SK-N-SH (cell line): ENCODE measurements at regions of chr2 and their contacts with region 1.

Region 1: DNA sequence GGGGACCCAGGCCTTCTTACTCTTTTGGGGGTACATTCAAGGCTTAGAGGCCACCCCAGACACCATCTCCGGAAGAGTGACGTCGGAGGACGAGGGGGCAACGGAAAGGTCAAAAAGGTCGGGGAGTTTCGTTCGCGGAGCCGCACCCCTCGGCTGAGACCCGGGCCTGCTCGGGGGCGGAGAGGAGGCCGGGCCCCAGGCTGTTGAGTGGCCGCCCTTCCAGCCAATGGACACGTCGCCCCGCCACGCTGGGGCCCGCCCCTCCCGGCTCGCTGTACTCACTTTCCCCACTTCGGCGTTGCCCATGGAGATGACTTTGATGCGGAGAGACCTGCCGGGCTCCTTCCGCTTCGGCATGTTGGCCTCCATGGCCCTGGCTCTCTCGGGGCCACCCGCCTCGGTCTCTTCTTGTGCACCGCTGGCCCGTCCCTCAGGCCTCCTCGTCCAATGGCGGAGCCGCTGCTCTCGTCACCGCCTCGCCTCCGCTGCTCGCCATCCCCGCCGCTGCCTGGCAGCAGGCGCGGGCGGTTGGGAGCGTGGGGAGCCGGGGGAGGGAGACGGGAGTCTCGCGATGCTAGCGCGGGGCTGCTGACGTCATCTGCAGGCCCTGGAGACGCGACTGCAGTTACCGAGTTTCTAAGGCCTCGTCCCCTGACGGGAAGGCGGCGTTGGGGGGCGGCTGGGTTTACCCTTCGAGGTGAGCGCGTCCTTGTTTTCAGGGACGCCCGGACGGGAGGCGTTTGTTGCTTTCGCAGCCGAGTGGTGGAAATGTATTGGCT is at the start of gene DNAJC27:
- DNase-seq: peak; percentile 99
- H3K4me3 ChIP-seq: peak within 1 kb of the TSS; percentile 87 to 93
- H3K27ac ChIP-seq: peak within 1 kb of the TSS; percentile 94 to 95
- H3K4me1 ChIP-seq: peaks cover 5 to 12% of the 10 kb centered on the region in 2 experiments; a peak in 3 of 4 replicates
- H3K27me3 ChIP-seq: no peaks in the 10 kb centered on the region
- CTCF ChIP-seq: no peak
- EP300 ChIP-seq: no peak; a peak in 1 of 4 replicates
- RAD21 ChIP-seq: no peak
- polyA plus RNA-seq, gene DNAJC27: 2.4 and 3.6 TPM in 2 replicates

Region 2: GRCh38 chr2:24945907-24946306 is 25.8 kb before region 1 on chr2:
- CTCF ChIA-PET with region 1: interaction called, 11 read pairs
- POLR2A ChIA-PET with region 1: no interaction called
- DNase-seq: no peak
- H3K4me3 ChIP-seq: no peak overlapping the region
- H3K27ac ChIP-seq: no peak overlapping the region
- H3K4me1 ChIP-seq: no peaks in the 10 kb centered on the region
- H3K27me3 ChIP-seq: no peaks in the 10 kb centered on the region
- CTCF ChIP-seq: no peak
- EP300 ChIP-seq: no peak
- RAD21 ChIP-seq: no peak

Region 3: DNA sequence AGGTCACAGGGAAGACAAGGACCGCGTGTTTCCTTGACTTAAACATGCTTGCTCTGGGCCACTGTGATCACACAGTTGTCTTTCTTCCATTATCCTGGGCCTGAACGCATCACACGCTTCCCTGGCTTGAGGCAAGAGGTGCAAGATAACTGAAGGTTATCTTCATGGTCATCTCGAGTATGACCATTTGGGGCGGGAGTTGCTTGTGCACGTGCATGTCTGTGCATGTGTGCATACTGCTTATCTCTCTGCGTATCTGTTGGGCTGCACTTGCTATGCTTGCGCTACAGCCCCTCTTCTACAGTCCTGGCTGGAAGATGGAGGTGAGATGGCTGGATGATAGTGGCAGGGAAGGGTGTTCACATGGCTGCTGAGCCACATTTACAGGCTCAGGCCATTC is 42.9 kb after region 1 on chr2:
- CTCF ChIA-PET with region 1: interaction called, 13 read pairs
- POLR2A ChIA-PET with region 1: no interaction called
- DNase-seq: peak; percentile 69
- H3K4me3 ChIP-seq: no peak overlapping the region
- H3K27ac ChIP-seq: no peak overlapping the region
- H3K4me1 ChIP-seq: peaks cover 0 to 6% of the 10 kb centered on the region in 2 experiments; a peak in 1 of 4 replicates
- H3K27me3 ChIP-seq: no peaks in the 10 kb centered on the region
- CTCF ChIP-seq: no peak
- EP300 ChIP-seq: peak in 1 of 2 experiments; percentile 83; a peak in 2 of 4 replicates
- RAD21 ChIP-seq: peak; percentile 36; the same call in 1 of the 2 replicates

Region 4: GRCh38 chr2:25053041-25053440 is 81.3 kb after region 1 on chr2:
- CTCF ChIA-PET with region 1: interaction called, 12 read pairs
- POLR2A ChIA-PET with region 1: no interaction called
- DNase-seq: no peak
- H3K4me3 ChIP-seq: no peak overlapping the region
- H3K27ac ChIP-seq: no peak overlapping the region
- H3K4me1 ChIP-seq: peaks cover 0 to 3% of the 10 kb centered on the region in 2 experiments; a peak in 1 of 4 replicates
- H3K27me3 ChIP-seq: no peaks in the 10 kb centered on the region
- CTCF ChIP-seq: no peak
- EP300 ChIP-seq: no peak
- RAD21 ChIP-seq: no peak

Region 5: DNA sequence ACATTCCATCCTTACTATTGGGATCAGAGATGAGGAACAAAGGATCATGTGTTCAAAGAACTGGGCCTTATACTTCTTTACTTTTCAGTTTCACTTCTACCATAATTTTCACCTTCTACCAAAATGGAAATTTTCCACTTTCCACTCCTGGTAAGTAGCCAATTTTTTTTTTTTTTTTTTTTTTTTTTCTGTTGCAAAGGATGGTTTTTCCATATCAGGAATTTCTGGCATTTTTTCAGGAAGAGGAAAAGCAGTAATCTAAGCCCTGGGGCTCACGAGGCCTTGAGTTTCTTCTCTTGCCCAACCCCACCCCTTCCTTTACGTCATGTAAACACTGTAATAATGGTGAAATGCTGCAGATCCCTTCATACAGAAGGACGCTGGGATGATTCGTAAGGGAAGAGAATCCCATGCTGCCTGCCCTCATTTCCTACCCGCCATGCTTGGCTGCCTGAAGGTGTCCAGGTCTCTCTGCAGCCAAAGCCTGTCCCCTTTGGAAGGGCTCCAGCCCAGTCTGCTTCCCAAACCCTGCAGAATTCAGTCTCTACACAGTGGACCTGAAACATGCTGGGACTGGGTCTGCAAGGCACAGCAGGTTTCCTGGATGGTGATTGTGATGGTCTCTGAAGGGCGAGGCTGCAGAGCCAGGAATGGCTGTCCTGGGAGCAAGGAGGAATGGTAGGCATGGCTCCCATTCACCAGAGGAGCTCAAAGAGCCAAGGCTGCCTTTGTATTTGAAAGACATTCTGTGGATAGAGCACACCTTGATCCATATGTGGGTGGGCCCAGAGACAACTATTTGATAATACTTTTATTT is 127.2 kb after region 1 on chr2:
- CTCF ChIA-PET with region 1: interaction called, 10 read pairs
- POLR2A ChIA-PET with region 1: no interaction called
- DNase-seq: no peak
- H3K4me3 ChIP-seq: no peak overlapping the region
- H3K27ac ChIP-seq: no peak overlapping the region
- H3K4me1 ChIP-seq: peaks cover 6 to 8% of the 10 kb centered on the region in 2 experiments; a peak in 3 of 4 replicates
- H3K27me3 ChIP-seq: no peaks in the 10 kb centered on the region
- CTCF ChIP-seq: no peak
- EP300 ChIP-seq: no peak
- RAD21 ChIP-seq: no peak

Region 6: GRCh38 chr2:25145803-25146202 is 174.1 kb after region 1 on chr2:
- CTCF ChIA-PET with region 1: interaction called, 519 read pairs
- POLR2A ChIA-PET with region 1: no interaction called
- DNase-seq: no peak
- H3K4me3 ChIP-seq: no peak overlapping the region
- H3K27ac ChIP-seq: no peak overlapping the region
- H3K4me1 ChIP-seq: no peaks in the 10 kb centered on the region
- H3K27me3 ChIP-seq: no peaks in the 10 kb centered on the region
- CTCF ChIP-seq: no peak
- EP300 ChIP-seq: no peak
- RAD21 ChIP-seq: no peak

Region 7: DNA sequence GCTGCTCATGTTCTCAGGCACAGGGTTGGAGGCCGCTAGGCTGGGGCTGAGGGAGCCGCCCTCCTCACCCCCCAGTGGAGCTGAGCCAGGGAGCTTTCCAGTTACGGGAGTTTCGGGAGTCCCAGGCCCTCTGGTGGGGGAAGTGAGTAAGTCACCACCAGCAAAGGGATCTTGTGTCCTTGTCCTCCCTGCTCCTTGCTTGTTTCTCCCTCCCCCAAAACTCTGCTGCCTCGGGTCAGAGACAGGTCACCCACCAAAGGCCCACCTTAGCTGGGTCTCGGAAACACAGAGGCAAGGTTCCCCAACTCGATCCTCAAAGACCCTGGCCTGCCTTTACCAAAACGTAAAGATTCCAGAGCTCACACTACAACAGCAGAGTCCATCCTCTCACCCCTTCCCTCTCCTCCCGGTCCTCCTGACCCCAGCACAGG is 257.1 kb after region 1 on chr2:
- CTCF ChIA-PET with region 1: interaction called, 34 read pairs
- POLR2A ChIA-PET with region 1: interaction called, 4 read pairs
- DNase-seq: peak; percentile 98
- H3K4me3 ChIP-seq: no peak overlapping the region; a peak in 1 of 4 replicates
- H3K27ac ChIP-seq: peak overlapping the region in 1 of 2 experiments; percentile 68; a peak in 2 of 4 replicates
- H3K4me1 ChIP-seq: peaks cover 3 to 37% of the 10 kb centered on the region in 2 experiments; a peak in 2 of 4 replicates
- H3K27me3 ChIP-seq: no peaks in the 10 kb centered on the region
- CTCF ChIP-seq: peak; percentile 84
- EP300 ChIP-seq: no peak
- RAD21 ChIP-seq: peak; percentile 72